Body of pancreas (tissue), 4 donors: ENCODE measurements at regions of chr11 and their contacts with region 1.

Region 1: DNA sequence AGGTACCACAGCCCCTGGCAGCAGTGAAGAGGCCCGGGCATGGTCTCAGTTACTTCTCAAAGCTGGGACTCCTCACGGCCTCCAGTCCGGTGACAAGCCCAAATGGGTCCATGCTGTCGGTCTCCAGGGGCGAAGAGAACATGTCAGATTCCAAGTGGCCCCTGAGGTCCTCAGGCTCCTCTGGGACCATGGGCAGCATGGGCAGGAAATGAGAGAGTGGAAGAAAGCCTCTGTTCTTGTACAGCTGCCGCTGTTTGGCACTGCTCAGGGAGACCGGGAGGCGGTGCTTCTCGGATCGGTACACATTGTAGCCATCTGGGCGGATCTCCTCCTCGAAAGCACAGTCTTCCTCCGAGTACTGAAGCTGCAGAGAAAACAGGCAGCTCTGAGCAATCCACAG is 4.6 kb downstream of the FGF19 start:
- DNase-seq: no peak
- ATAC-seq: no peak
- H3K4me3 ChIP-seq: no peak overlapping the region
- H3K27ac ChIP-seq: no peak overlapping the region
- H3K4me1 ChIP-seq: peaks cover 7% of the 10 kb centered on the region
- H3K27me3 ChIP-seq: peaks cover 5 to 7% of the 10 kb centered on the region in 2 donors
- CTCF ChIP-seq: no peak
- POLR2A ChIP-seq: no peak

Region 2: GRCh38 chr11:69881449-69882269 is 182.4 kb after region 1 on chr11:
- intact Hi-C with region 1: loop called (anchors 5 kb)
- DNase-seq: no peak
- ATAC-seq: no peak
- H3K4me3 ChIP-seq: no peak overlapping the region
- H3K27ac ChIP-seq: no peak overlapping the region
- H3K4me1 ChIP-seq: no peaks in the 10 kb centered on the region
- H3K27me3 ChIP-seq: no peaks in the 10 kb centered on the region
- CTCF ChIP-seq: no peak
- POLR2A ChIP-seq: no peak

Region 3: DNA sequence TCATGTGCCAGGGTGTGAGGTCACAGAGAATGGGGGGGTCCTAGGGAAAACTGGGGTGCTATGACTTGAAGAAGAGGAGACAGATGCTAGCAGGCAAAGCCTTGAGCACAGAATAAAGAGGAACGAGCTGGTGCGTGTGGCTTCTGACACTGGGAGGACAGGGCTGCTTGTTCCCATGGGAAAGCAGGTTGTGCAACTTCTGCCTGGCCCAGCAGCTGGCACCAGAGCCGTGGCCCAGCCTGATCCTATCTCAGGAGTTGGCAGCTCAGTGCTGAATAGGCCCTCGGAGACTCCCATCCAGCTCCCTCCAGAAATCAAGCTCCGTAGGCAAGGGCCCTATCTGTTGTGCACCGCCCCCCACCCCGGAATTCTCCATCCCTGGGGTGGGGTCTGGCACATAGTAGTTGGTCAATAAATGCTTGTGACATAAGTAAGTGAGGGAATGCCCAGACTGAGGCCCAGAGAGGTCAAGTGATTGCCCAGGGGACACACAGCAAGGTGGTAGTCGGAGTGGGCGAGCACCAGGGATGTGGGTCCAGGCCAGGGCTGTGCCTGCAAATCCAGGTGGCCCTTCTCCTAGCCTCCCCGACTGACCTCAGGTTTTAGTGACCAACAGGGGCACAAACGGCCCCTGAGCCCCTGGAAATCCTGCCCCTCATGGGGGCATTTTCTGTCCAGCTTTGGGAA is 484.4 kb after region 1 on chr11:
- intact Hi-C with region 1: loop called (anchors 10 kb)
- DNase-seq: peak in 2 of 4 donors; percentile 20 to 34
- ATAC-seq: peak; percentile 56
- H3K4me3 ChIP-seq: no peak overlapping the region
- H3K27ac ChIP-seq: no peak overlapping the region
- H3K4me1 ChIP-seq: no peaks in the 10 kb centered on the region
- H3K27me3 ChIP-seq: no peaks in the 10 kb centered on the region
- CTCF ChIP-seq: no peak
- POLR2A ChIP-seq: no peak